Spleen (tissue), 13 donors: ENCODE measurements at regions of chr2 and their contacts with region 1.

Region 1: DNA sequence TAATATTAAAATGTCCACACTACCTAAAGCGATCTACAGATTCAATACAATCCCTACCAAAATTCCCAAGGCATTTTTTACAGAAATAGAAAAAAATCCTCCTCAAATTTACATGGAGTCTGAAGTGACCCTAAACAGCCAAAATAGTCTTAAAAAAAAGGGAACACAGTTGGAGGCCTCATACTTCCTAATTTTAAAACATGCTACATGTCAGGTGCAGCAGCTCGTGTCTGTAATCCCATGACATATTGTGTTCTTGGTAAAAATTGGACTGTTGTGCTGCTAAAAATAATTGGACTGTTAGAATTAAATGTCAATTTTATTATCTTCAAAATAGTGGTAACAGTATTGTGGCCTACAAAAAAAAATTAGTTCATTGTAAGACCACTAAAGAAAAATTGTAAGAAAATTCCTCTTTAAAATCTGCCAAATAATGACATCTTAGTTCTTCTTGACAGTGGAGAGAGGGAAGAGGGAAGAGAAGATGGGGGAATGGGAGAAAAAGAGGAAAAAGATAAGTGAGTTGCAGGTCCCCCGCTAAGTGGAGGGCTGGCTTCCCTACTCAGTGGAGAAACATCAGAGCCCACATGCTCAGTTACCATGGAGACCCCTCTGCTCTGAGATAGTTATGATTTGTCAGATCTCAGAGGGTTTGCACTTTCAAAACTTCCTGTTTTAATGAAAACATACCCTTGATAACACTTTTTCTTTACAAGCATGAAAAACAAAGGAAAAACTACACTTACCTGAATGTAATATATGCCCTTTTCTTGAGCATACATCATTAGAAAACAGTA is 46.5 kb downstream of the UNC50 start:
- DNase-seq: no peak
- H3K4me3 ChIP-seq: no peak overlapping the region
- H3K27ac ChIP-seq: peak overlapping the region in 6 of 8 donors; percentile 7 to 63 (median 25)
- H3K4me1 ChIP-seq: peaks cover 0 to 67% (median 15%) of the 10 kb centered on the region in 6 donors
- H3K27me3 ChIP-seq: no peaks in the 10 kb centered on the region
- CTCF ChIP-seq: no peak
- POLR2A ChIP-seq: no peak

Region 2: DNA sequence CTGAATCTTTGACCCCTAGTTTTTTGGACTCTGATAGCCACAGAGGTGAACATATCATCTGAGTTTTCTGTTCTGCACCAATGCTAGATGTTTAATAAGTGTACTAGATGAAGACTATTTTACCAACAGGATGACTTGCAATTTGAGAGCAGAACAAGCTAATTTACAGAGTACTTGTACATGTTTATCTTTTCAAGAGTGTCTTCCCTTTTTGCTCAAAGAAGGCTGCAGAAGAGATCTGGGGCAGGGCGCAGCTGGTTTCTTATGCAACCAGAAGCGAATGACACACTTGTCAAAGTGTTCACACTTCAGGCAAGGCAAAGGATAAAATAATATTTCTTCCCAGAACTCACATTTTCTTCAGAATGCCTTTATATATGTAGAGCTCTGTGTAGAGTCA is 481.9 kb before region 1 on chr2:
- intact Hi-C with region 1: no loop called
- DNase-seq: no peak
- H3K4me3 ChIP-seq: no peak overlapping the region
- H3K27ac ChIP-seq: no peak overlapping the region
- H3K4me1 ChIP-seq: no peaks in the 10 kb centered on the region
- H3K27me3 ChIP-seq: peaks cover 0 to 11% (median 0%) of the 10 kb centered on the region in 7 donors
- CTCF ChIP-seq: no peak
- POLR2A ChIP-seq: no peak

Region 3: DNA sequence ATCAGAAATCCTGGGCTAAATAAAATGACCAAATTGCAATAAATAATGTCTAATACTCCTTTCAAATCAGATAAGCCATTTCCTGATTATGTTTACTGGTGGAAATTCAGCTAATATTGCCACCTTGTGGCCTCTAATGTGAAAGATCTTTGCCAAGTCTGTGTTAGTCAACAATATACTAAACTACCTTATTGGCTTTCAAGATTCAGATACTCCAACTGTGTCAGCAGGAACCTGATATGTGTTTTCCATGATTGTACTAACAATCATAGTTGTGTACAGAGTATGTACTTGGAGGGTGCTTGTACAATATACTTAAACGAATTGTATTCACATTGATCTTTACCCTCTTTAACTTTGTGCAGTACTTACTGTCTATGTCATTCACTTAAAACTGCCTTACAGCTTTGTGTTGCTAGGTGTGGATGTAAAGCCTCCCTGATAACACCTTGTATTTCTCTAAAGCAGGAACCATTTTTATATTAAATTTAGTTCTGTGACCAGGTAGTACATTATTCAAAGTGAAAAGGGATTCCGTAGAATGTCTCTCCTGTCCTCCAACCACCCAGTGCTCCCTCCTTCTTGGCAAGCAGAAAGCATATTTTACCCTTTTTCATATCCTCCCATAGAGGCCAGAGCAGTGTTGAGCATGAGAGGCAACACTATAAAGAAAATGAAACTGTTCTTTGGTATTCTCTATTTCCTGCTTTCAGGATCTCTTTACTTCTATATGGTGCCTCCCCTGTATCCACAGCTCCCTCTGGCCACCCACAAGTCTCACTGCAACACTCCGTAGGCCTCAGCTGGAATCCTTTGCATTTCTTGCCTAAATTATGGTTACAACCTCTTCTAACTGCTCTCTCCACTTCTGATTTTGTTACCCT is 411.4 kb after region 1 on chr2:
- intact Hi-C with region 1: loop called (anchors 10 kb)
- DNase-seq: no peak
- H3K4me3 ChIP-seq: peak overlapping the region in 1 of 8 donors; percentile 28
- H3K27ac ChIP-seq: peak overlapping the region; percentile 30 to 70 (median 56)
- H3K4me1 ChIP-seq: peaks cover 8 to 21% (median 15%) of the 10 kb centered on the region in 6 donors
- H3K27me3 ChIP-seq: no peaks in the 10 kb centered on the region
- CTCF ChIP-seq: peak in 8 of 11 experiments; percentile 15 to 59 (median 42)
- POLR2A ChIP-seq: no peak

Region 4: GRCh38 chr2:99180755-99181623 is 526.1 kb after region 1 on chr2 and contains the starts of genes MITD1 and MRPL30:
- intact Hi-C with region 1: no loop called
- DNase-seq: peak; percentile 96
- H3K4me3 ChIP-seq: peak within 1 kb of the TSS; percentile 66 to 90 (median 84)
- H3K27ac ChIP-seq: peak within 1 kb of the TSS; percentile 58 to 90 (median 86)
- H3K4me1 ChIP-seq: peaks cover 33 to 89% (median 65%) of the 10 kb centered on the region in 6 donors
- H3K27me3 ChIP-seq: no peaks in the 10 kb centered on the region
- CTCF ChIP-seq: peak in 1 of 11 experiments; percentile 27
- POLR2A ChIP-seq: peak in 1 of 3 donors; percentile 57
- total RNA-seq, gene MITD1: 30.4 to 66.4 (median 37.1) TPM
- total RNA-seq, gene MRPL30: 17.1 to 26.0 (median 22.4) TPM